WTC11 (cell line): ENCODE measurements at regions of chr1 and their contacts with region 1.

Region 1: GRCh38 chr1:95084317-95085176 is 11.8 kb upstream of the ALG14 start:
- DNase-seq: peak; percentile 28
- ATAC-seq: peak; percentile 75
- H3K4me3 Mint-ChIP-seq: no peak overlapping the region
- H3K27ac Mint-ChIP-seq: no peak overlapping the region
- H3K4me1 Mint-ChIP-seq: peaks cover 29% of the 10 kb centered on the region
- H3K27me3 Mint-ChIP-seq: no peaks in the 10 kb centered on the region
- CTCF ChIP-seq: peak; percentile 12; the same call in 1 of the 2 replicates

Region 2: DNA sequence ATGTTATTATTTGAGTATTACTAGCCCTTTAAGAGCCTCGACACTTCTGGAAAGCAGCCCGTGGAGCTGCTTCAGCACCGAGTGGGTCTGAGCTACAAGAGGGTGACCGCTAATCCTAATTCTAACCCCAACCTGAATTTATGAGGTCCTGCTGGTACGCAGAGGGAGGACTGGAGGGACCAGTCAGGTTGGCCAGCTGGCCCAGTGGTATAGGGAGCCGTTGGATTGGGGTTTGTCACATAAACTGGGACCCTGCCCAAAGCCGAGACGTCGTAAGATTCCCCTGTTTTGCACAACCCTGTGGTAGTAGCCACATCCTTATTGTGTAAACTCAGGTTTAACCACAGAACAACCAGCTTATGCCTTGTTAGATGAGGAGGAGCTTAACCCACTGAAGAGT is 482.2 kb before region 1 on chr1:
- CTCF ChIA-PET with region 1: no interaction called
- POLR2A ChIA-PET with region 1: no interaction called
- DNase-seq: no peak
- ATAC-seq: no peak
- H3K4me3 Mint-ChIP-seq: no peak overlapping the region
- H3K27ac Mint-ChIP-seq: 0 out of 2 replicates have a peak overlapping the region, but pooled peaks have one; percentile 28
- H3K4me1 Mint-ChIP-seq: peaks cover 12% of the 10 kb centered on the region; the same call in 1 of the 2 replicates
- H3K27me3 Mint-ChIP-seq: no peaks in the 10 kb centered on the region
- CTCF ChIP-seq: no peak

Region 3: GRCh38 chr1:95058974-95059373 is 25.6 kb before region 1 on chr1:
- CTCF ChIA-PET with region 1: interaction called, 10 read pairs
- POLR2A ChIA-PET with region 1: no interaction called
- DNase-seq: no peak
- ATAC-seq: no peak
- H3K4me3 Mint-ChIP-seq: no peak overlapping the region
- H3K27ac Mint-ChIP-seq: no peak overlapping the region
- H3K4me1 Mint-ChIP-seq: no peaks in the 10 kb centered on the region
- H3K27me3 Mint-ChIP-seq: no peaks in the 10 kb centered on the region; the same call in 1 of the 2 replicates
- CTCF ChIP-seq: no peak

Region 4: DNA sequence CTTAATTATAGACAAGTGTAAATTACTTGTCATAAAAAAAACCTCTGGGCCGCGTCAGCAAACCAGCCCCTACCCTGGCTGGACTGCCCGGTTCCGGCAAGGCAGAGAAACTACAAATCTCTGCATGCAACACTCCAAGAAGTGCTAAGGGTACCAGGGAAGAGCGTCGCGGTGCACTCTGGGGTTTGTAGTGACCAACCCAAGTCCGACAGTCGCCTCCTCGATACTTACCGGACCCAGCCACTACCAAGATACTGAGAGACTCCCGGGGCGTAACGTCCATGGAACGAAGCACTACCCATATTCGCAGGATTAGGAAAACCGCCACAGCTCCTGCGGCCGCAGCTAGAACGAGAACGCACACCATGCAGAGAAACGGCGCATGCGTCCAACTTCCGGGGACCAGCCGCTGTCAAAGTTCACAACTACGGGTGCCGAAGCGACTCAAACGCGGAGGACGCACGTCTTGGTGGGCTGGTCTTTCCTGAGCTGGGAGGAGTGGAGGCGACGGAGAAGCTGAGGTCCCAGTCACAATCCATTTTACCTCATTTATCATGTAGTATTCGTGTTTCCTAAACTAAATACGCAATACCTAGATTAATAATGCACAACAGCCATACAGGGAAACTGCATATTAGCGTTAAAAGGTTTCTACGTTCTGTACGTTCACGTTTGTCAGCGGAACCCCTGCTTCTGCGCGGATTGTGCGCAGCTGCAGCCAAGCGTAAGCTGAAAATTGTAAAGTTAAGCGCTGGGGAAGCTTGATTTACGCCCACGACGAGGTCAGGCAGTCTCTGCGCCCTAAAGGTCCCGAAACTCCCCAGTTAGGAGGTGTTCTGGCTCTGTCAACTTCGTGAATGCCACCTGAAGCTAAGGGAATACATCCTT is 11.8 kb before region 1 on chr1 and contains the start of gene ALG14:
- CTCF ChIA-PET with region 1: interaction called, 35 read pairs
- POLR2A ChIA-PET with region 1: no interaction called
- DNase-seq: peak; percentile 86
- ATAC-seq: peak; percentile 99
- H3K4me3 Mint-ChIP-seq: peak within 1 kb of the TSS; percentile 97
- H3K27ac Mint-ChIP-seq: peak within 1 kb of the TSS; percentile 90
- H3K4me1 Mint-ChIP-seq: peaks cover 9% of the 10 kb centered on the region
- H3K27me3 Mint-ChIP-seq: peaks cover 2% of the 10 kb centered on the region; the same call in 1 of the 2 replicates
- CTCF ChIP-seq: no peak
- total RNA-seq, gene ALG14: 0.94 to 2.3 TPM (median 1.4 TPM) in 3 replicates

Region 5: DNA sequence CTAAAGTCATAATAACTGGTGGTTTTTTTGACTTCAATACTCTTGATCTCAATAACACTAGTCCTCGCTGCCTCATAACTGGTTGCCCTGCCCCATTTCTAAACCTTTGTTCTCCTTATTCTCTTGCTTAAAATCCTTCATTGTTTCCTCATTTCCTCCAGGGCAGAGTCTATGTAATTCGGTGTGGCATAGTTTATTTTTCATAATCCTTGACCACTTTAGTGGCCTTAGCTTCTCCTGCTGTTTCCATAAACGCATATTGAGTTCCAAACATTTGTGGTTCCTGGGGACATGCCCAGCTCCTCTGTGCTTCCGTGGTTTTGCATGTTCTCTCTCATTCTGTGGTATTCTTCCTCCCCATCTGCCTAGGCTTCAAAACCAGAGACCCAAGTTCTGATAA is 13.6 kb after region 1 on chr1:
- CTCF ChIA-PET with region 1: interaction called, 11 read pairs
- POLR2A ChIA-PET with region 1: no interaction called
- DNase-seq: no peak
- ATAC-seq: no peak
- H3K4me3 Mint-ChIP-seq: no peak overlapping the region
- H3K27ac Mint-ChIP-seq: no peak overlapping the region
- H3K4me1 Mint-ChIP-seq: no peaks in the 10 kb centered on the region
- H3K27me3 Mint-ChIP-seq: no peaks in the 10 kb centered on the region
- CTCF ChIP-seq: no peak

Region 6: GRCh38 chr1:95116580-95117206 is 32.1 kb after region 1 on chr1:
- CTCF ChIA-PET with region 1: interaction called, 29 read pairs
- POLR2A ChIA-PET with region 1: interaction called, 3 read pairs
- DNase-seq: peak; percentile 73
- ATAC-seq: peak; percentile 74
- H3K4me3 Mint-ChIP-seq: peak overlapping the region; percentile 92
- H3K27ac Mint-ChIP-seq: peak overlapping the region; percentile 83
- H3K4me1 Mint-ChIP-seq: peaks cover 20% of the 10 kb centered on the region
- H3K27me3 Mint-ChIP-seq: peaks cover 19% of the 10 kb centered on the region
- CTCF ChIP-seq: peak; percentile 58